WTC11 (cell line): ENCODE measurements at regions of chrX and their contacts with region 1.

Region 1: GRCh38 chrX:16882702-16883486 is 12.7 kb upstream of the RBBP7 start:
- DNase-seq: peak; percentile 64
- ATAC-seq: peak; percentile 94
- H3K4me3 Mint-ChIP-seq: peak overlapping the region; percentile 81
- H3K27ac Mint-ChIP-seq: no peak overlapping the region; the same call in 1 of the 2 replicates
- H3K4me1 Mint-ChIP-seq: 0 out of 2 replicates have a peak, but pooled peaks cover 3% of the 10 kb centered on the region
- H3K27me3 Mint-ChIP-seq: no peaks in the 10 kb centered on the region
- CTCF ChIP-seq: 0 out of 2 replicates have a peak, but pooled peaks have one; percentile 15

Region 2: DNA sequence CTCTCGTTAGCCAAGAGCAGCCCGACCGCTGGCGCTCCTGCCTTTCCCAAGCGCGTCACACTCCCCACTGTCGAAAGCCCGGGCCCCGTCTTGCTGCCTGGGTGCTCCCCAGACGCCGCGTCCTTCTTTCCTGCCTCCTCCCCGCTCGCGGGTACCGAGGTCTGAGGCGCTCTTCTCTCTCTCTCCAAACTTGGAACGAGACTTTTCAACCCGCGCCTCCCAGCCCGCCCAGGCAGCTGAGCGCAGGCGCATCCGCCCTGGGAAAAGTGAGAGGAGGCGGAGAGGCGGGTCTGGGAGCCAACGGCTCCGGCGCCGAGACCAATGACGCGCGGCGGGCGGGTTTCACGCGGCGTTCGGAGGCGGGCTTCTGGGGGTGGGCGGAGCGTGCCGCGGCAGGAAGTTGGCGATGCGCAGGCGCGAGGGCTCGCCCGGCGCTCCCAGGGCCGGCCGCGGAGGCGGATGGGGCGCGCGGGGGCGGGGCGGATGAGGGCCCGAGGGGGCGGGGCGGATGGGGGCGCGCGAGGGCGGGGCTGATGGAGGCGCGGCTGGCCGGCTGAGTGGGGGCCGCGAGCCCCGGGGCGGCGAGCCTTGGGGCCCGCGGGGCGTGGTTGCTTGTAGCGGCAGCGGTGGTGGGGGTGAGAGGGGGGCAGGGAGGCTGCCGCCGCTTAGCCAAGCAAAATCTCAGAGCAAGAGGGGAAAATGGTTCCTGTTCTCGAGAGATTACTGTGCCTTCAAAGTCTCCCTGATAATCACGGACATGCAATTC is 12.6 kb before region 1 on chrX and contains the start of gene RBBP7:
- CTCF ChIA-PET with region 1: interaction called, 15 read pairs
- POLR2A ChIA-PET with region 1: no interaction called
- DNase-seq: peak; percentile 85
- ATAC-seq: peak; percentile 84
- H3K4me3 Mint-ChIP-seq: peak within 1 kb of the TSS; percentile 93
- H3K27ac Mint-ChIP-seq: peak within 1 kb of the TSS; percentile 98
- H3K4me1 Mint-ChIP-seq: peaks cover 28% of the 10 kb centered on the region
- H3K27me3 Mint-ChIP-seq: no peaks in the 10 kb centered on the region
- CTCF ChIP-seq: no peak
- total RNA-seq, gene RBBP7: 113 to 120 TPM (median 118 TPM) in 3 replicates

Region 3: DNA sequence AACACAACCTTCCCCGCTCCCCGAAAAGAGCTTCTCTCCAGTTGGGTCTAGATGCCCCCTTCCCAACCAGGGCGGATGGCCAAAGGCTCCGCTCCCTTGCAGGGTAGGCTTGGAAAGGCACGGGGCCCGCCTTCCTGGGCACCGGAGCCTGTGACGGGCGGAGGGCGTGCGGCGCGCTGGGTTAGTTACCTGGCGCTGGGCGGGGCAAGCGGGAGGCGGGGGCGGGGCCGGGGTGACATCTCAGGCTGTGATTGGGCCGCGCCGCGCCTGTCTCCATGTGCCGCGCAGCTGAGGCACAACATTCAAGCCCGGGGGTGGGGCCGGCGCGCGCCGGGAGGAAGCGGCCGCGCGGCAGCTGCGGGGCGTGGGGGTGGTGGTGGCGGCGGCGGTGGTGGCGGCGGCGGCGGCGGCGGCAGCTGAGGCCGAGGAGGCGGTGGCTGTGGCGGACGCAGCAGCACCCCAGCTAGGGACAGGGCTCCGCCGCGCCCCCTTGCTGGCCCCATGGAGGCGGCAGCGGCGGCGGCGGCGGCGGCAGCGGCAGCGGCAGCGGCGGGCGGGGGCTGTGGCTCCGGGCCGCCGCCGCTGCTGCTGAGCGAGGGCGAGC is 63.6 kb after region 1 on chrX and contains the start of gene REPS2:
- CTCF ChIA-PET with region 1: interaction called, 10 read pairs
- POLR2A ChIA-PET with region 1: no interaction called
- DNase-seq: peak; percentile 84
- ATAC-seq: peak; percentile 98
- H3K4me3 Mint-ChIP-seq: peak within 1 kb of the TSS; percentile 82
- H3K27ac Mint-ChIP-seq: peak within 1 kb of the TSS; percentile 36; the same call in 1 of the 2 replicates
- H3K4me1 Mint-ChIP-seq: peaks cover 4% of the 10 kb centered on the region; the same call in 1 of the 2 replicates
- H3K27me3 Mint-ChIP-seq: peaks cover 23% of the 10 kb centered on the region
- CTCF ChIP-seq: no peak
- total RNA-seq, gene REPS2: 2.2 to 4.3 TPM (median 3.5 TPM) in 3 replicates

Region 4: DNA sequence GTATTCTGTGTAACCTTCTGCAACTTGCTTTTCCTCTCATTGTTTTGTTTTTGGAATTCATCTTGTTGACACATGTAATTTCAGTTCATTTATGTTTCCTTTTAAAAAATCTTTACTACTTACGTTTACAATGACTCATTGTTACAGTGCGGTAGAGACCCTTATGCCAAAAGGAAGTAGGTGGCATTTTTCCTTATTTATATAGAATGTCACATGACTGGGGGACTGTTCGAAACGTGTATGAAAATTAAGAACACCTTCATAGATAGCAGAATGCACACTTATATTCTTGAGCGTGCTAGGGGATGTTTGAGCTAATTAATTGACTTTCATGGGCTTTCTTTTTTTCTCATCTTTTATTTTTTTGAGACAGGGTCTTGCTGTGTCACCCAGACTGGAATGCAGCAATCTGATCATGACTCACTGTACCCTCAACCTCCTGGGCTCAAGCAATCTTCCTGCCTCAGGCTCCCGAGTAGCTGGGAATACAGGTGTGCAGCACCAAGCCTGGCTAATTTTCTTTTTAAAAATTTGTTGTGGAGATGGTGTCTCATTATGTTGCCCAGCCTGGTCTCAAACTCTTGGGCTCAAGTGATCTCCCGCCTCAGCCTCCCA is 70.8 kb after region 1 on chrX:
- CTCF ChIA-PET with region 1: interaction called, 13 read pairs
- POLR2A ChIA-PET with region 1: no interaction called
- DNase-seq: no peak
- ATAC-seq: no peak
- H3K4me3 Mint-ChIP-seq: no peak overlapping the region
- H3K27ac Mint-ChIP-seq: no peak overlapping the region
- H3K4me1 Mint-ChIP-seq: peaks cover 26% of the 10 kb centered on the region
- H3K27me3 Mint-ChIP-seq: peaks cover 3% of the 10 kb centered on the region; the same call in 1 of the 2 replicates
- CTCF ChIP-seq: no peak